ENCODE measurements at regions of chr12 and their contacts with region 1.

Region 1: GRCh38 chr12:62799126-62799736 is 135.7 kb downstream of the PPM1H start:
- ATAC-seq: peak; percentile 85 to 98 (median 92)
- H3K4me3 ChIP-seq: no peak overlapping the region
- H3K27ac ChIP-seq: no peak overlapping the region
- H3K4me1 ChIP-seq: peaks cover 0 to 5% of the 10 kb centered on the region in 2 donors

Region 2: DNA sequence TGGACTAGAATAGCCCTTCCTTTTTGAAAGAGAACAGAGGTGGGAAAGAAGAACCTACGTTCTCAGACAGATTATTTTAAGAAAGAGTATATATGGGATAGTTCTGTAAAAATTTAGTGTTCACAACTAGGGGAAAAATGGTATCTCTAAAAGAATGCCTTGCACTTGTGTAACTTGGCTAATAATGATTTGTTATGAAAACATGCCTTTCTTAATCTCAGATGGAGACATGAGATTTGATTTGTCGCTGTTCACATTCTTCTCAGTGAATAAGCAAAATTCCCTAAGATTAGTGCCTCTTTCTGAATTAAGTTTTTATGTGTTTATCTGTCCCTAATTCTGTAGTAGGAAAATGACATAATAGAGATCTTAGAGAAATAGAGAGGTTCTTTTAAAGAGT is 438.2 kb before region 1 on chr12:
- in situ Hi-C with region 1: no loop called
- ATAC-seq: no peak
- H3K4me3 ChIP-seq: no peak overlapping the region
- H3K27ac ChIP-seq: no peak overlapping the region
- H3K4me1 ChIP-seq: no peaks in the 10 kb centered on the region

Region 3: GRCh38 chr12:62435303-62436163 is 363.7 kb before region 1 on chr12:
- in situ Hi-C with region 1: loop called in 7 of 9 experiments (anchors 10 to 25 kb)
- ATAC-seq: peak; percentile 64 to 95 (median 84)
- H3K4me3 ChIP-seq: peak overlapping the region in 3 of 5 donors; percentile 15 to 27 (median 22)
- H3K27ac ChIP-seq: no peak overlapping the region
- H3K4me1 ChIP-seq: no peaks in the 10 kb centered on the region

Region 4: GRCh38 chr12:62581288-62582064 is 217.8 kb before region 1 on chr12:
- in situ Hi-C with region 1: loop called in 6 of 9 experiments (anchors 10 to 25 kb)
- ATAC-seq: peak in 7 of 8 experiments; percentile 34 to 75 (median 69)
- H3K4me3 ChIP-seq: no peak overlapping the region
- H3K27ac ChIP-seq: no peak overlapping the region
- H3K4me1 ChIP-seq: no peaks in the 10 kb centered on the region

Region 5: DNA sequence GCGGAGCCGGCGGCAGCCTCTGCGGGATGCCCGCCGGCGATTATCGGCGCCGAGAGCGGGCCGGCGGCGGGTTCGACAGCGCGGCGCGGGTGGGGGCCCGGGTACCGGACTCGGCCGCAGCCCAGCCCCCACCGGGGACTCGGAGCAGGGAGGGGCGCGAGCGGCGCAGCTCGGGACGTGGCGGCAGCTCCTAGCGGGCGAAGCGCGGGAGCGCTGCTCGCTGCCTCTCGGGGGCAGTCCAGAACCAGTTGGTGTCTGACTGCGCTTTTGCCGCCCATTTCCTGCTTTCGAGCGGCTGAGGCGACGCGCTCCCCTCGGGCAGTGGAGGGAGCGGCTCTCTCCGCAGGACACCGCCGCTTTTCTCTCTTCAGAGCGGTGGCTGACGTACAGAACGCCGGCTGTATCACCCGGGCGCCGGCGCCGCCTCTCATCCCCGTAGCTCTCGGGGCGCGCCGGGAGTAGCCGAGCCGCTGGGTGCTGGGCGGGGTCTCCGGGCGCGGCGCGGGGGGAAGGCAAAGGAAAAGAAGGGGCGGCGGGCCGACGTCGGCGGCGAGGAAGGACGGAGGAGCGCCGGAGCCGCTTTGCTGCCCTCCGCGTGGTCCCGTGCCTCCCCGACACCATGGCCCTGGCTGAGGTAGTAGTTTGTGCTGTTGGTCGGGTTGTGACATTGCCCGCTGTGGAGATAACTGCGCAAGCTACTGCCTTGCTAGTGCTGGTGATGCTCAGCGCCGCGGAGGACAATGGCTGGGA is 196.0 kb before region 1 on chr12:
- in situ Hi-C with region 1: loop called in 4 of 9 experiments (anchors 10 to 25 kb)
- ATAC-seq: peak; percentile 74 to 89 (median 84)
- H3K4me3 ChIP-seq: peak overlapping the region; percentile 55 to 90 (median 88)
- H3K27ac ChIP-seq: peak overlapping the region; percentile 99
- H3K4me1 ChIP-seq: peaks cover 4 to 17% of the 10 kb centered on the region in 2 donors

Region 6: DNA sequence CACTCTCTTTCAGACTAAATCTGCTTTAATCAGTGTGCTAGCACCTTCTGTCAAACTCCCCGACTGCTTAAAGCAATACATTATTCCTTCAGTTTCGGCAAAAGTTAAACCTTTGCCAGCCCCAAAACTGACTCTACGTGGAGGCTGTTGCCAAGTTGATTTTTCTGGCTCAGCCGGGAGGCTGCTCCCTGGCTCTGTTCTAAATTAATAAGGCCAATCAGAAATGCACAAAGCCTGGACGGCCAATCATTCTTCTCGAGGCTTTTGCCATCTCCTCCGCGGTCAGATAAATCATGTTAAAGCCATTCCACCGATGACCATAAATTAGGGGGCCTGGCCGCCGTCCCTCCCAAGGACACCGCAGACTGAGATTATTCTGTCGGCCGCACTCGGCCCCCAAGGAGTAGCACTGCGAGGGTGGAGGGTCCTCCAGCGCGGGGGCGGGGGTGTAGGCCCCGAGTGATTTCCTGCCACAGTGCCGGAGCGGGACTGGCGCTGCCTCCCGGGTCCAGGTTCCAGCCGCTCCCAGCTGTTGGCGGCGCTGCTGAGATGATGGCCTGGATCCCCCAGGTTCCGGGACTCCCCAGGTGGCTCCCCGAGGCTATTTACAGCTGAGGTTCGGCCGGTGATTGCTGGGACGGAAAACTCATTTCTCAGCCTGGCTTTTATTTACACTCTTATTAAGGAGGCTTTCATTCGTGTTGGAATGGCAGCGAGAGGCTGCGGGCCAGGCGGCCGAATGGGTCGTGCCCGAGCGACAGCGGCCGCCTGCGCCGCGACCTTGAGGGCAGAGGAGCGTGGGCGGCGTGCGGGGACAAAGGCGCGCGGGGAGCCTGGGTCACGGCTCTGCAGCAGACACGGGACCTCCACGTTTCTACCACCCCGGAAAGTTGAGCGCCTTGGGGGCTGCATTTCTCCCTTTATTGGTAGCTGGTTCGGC is 167.5 kb before region 1 on chr12:
- in situ Hi-C with region 1: loop called in 1 of 9 experiments (anchors 25 kb)
- ATAC-seq: peak; percentile 71 to 90 (median 86)
- H3K4me3 ChIP-seq: peak overlapping the region; percentile 22 to 30 (median 28)
- H3K27ac ChIP-seq: peak overlapping the region; percentile 78
- H3K4me1 ChIP-seq: peaks cover 58 to 60% of the 10 kb centered on the region in 2 donors

Region 7: GRCh38 chr12:64236549-64236948 is 1437.3 kb after region 1 on chr12:
- in situ Hi-C with region 1: no loop called
- ATAC-seq: peak in 1 of 8 experiments; percentile 24
- H3K4me3 ChIP-seq: no peak overlapping the region
- H3K27ac ChIP-seq: no peak overlapping the region
- H3K4me1 ChIP-seq: no peaks in the 10 kb centered on the region